IMR-90 (cell line): ENCODE measurements at regions of chr1 and their contacts with region 1.

Region 1: DNA sequence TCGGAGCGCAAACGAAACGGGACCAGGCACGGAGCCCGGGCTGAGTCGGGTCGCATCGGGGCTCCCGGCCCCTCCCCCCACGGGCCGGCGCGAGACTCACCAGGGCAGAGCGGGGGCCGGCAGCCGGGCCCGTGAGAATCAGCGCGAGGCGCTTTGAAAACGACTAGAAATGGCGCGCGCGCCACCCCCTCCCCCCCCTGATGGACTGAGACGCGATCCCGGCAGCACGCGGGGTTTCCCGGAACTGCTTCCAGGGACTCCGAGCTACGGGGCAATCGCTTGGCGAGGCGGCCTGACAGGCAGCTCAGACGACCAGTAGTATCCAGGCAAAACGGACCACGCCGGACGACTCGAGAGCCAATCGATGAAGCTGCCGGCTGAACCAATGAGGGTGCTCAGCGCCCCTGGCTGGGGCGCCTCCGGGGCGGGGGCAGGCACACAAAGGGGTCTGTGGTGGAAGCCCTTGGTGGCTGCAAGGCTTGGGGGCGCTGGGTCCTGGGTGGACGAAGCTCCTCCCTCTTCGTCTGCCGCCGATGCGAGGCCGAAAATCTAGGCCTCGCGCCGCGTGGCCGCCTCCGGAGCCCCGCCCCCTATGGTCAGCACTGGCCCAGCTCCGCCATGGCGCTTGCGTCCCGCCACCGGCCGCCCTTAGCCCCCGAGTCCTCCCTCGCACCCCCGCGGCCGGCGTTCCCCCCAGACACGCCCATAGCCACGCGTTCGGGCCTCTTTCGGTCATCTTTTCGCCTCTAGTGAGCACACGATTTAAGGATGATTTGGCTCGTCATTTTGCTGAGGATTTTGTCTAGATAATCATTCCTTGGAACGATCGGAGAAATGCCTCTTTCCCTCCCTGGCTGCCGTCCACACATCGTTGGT is at the start of gene HNRNPR:
- DNase-seq: peak; percentile 100
- ATAC-seq: peak; percentile 94
- H3K4me3 ChIP-seq: peak within 1 kb of the TSS; percentile 93
- H3K27ac ChIP-seq: peak within 1 kb of the TSS; percentile 95
- H3K4me1 ChIP-seq: peaks cover 2% of the 10 kb centered on the region; the same call in 1 of the 2 replicates
- H3K27me3 ChIP-seq: no peaks in the 10 kb centered on the region
- CTCF ChIP-seq: no peak
- POLR2A ChIP-seq: no peak; the same call in 1 of the 2 replicates
- RAD21 ChIP-seq: no peak
- total RNA-seq, gene HNRNPR: 99.7 and 152 TPM in 2 replicates

Region 2: GRCh38 chr1:23163395-23163794 is 181.0 kb before region 1 on chr1:
- CTCF ChIA-PET with region 1: no interaction called
- POLR2A ChIA-PET with region 1: interaction called, 17 read pairs
- dilution Hi-C with region 1: no loop called
- in situ Hi-C with region 1: no loop called
- intact Hi-C with region 1: no loop called
- DNase-seq: no peak
- ATAC-seq: no peak
- H3K4me3 ChIP-seq: no peak overlapping the region
- H3K27ac ChIP-seq: no peak overlapping the region
- H3K4me1 ChIP-seq: peaks cover 4% of the 10 kb centered on the region
- H3K27me3 ChIP-seq: no peaks in the 10 kb centered on the region
- CTCF ChIP-seq: no peak
- POLR2A ChIP-seq: no peak
- RAD21 ChIP-seq: no peak

Region 3: DNA sequence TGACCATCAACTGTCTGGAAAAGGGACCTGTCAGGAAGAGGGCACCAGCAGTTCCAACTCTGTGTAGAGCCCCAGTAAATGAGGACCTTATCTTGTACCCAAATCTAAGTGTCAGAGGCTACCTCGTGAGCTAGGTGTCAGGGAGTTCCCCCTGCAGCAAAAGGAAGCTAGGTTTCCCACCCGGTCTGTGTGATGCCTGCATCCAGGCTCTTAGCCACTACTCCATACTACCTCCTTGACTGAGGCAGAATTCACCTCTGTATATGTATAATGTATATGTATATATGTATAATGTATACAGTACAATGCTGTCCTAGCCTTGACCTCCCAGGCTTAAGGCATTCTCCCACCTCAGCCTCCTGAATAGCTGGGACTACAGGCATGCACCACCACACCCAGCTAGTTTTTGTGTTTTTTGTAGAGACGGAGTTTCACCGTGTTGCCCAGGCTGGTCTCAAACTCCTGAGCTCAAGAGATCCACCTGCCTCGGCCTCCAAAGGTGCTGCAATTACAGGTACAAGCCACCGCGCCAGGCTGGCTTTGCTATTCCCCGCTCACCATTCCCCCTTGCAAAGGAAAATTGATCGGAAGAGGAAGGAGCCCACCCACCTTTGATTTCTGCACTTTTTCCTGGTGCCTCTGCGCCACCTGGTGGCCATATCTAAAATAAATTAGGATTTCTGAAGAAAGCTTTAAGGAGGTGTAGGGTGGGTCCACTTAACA is 160.0 kb before region 1 on chr1:
- CTCF ChIA-PET with region 1: no interaction called
- POLR2A ChIA-PET with region 1: interaction called, 14 read pairs
- dilution Hi-C with region 1: no loop called
- in situ Hi-C with region 1: no loop called
- intact Hi-C with region 1: no loop called
- DNase-seq: peak; percentile 41
- ATAC-seq: peak; percentile 51; the same call in 1 of the 2 replicates
- H3K4me3 ChIP-seq: no peak overlapping the region
- H3K27ac ChIP-seq: no peak overlapping the region
- H3K4me1 ChIP-seq: 0 out of 2 replicates have a peak, but pooled peaks cover 4% of the 10 kb centered on the region
- H3K27me3 ChIP-seq: no peaks in the 10 kb centered on the region
- CTCF ChIP-seq: peak; percentile 72
- POLR2A ChIP-seq: no peak
- RAD21 ChIP-seq: peak; percentile 83

Region 4: DNA sequence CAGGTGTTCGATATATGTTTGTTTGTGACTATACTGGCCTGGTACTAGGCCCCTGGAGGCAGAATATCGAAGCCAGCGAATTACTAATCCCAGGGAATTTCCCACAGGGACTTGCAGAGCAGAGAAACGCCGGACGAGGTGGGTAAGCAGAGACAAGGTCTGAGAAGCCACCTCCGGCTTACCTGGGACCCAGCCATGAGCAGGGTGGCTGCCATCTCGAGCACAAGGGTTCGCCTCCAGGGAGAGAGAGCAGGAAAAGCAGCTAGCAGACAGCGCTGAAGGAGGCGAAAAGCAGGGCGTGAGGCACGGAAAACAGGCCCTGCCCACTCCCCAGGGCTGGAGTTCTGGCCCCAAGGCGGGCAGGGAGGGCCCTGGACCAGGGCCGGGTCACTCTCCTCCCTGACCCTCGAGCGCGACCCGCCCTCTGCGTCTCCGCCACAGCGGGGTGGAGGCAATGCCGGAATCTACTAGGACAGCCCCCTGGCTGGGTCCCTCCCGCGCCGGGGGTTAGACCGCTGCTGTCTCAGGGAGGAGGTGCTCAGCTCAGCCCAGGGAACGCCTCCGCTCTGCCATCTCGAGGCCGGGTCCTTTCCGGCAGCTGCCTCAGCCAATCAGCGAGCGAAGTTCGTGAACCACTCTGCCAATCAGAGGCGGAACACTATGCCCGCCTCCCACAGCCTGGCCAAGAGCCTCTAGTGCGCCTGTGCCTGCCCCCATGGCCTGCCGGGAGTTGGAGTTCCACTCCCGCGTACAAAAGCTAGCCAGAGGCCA is 23.6 kb after region 1 on chr1:
- CTCF ChIA-PET with region 1: no interaction called
- POLR2A ChIA-PET with region 1: interaction called, 3 read pairs
- dilution Hi-C with region 1: no loop called
- in situ Hi-C with region 1: no loop called
- intact Hi-C with region 1: loop called (anchors 1 kb)
- DNase-seq: peak; percentile 99
- ATAC-seq: peak; percentile 89
- H3K4me3 ChIP-seq: peak overlapping the region; percentile 67
- H3K27ac ChIP-seq: peak overlapping the region; percentile 95
- H3K4me1 ChIP-seq: peaks cover 15% of the 10 kb centered on the region
- H3K27me3 ChIP-seq: no peaks in the 10 kb centered on the region
- CTCF ChIP-seq: no peak
- POLR2A ChIP-seq: peak; percentile 54
- RAD21 ChIP-seq: no peak

Region 5: DNA sequence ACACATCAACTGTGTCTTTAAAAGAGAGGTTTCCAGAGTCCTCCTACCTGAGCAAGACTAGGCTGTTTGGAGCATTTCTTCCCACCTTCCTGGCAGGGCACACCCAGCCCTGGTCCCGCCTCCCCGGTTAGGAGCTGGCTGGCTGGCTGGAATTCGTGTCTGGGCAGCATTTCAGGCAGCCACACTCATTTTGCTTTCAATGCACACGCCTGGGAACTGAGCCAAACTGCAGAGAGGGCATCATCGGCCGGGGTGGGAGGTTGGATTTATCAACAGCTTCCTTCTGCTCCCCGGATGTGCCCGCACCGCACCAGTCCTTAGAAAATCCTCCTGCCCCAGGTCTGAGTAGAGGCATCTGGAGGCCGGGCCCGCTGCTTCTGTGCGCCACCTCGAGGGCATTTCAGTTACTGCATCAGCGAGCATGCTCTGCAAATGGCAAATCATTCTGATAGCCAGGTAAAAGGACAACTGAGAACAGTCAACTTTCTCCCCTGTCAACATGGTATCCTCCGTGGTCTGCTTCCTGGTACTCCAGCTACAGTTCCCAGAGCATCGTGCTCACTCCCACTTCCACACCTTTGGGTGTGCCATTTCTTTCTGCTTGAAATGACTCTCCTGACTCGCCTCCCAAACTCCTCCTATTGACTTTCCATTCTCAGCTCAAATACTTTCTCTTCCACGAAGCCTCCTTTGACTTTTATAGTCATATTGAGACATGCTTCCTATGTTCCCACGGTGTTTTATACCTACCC is 59.6 kb after region 1 on chr1:
- CTCF ChIA-PET with region 1: interaction called, 8 read pairs
- POLR2A ChIA-PET with region 1: no interaction called
- dilution Hi-C with region 1: no loop called
- in situ Hi-C with region 1: no loop called
- intact Hi-C with region 1: loop called (anchors 1 kb)
- DNase-seq: peak; percentile 89
- ATAC-seq: peak; percentile 89
- H3K4me3 ChIP-seq: no peak overlapping the region
- H3K27ac ChIP-seq: peak overlapping the region; percentile 23
- H3K4me1 ChIP-seq: peaks cover 21% of the 10 kb centered on the region
- H3K27me3 ChIP-seq: no peaks in the 10 kb centered on the region
- CTCF ChIP-seq: peak; percentile 89
- POLR2A ChIP-seq: no peak
- RAD21 ChIP-seq: peak; percentile 93

Region 6: GRCh38 chr1:23484253-23485001 is 140.1 kb after region 1 on chr1:
- CTCF ChIA-PET with region 1: no interaction called
- POLR2A ChIA-PET with region 1: no interaction called
- dilution Hi-C with region 1: no loop called
- in situ Hi-C with region 1: no loop called
- intact Hi-C with region 1: loop called (anchors 5 kb)
- DNase-seq: peak; percentile 89
- ATAC-seq: peak; percentile 94
- H3K4me3 ChIP-seq: peak overlapping the region; percentile 84
- H3K27ac ChIP-seq: peak overlapping the region; percentile 99
- H3K4me1 ChIP-seq: peaks cover 8% of the 10 kb centered on the region; the same call in 1 of the 2 replicates
- H3K27me3 ChIP-seq: peaks cover 5% of the 10 kb centered on the region
- CTCF ChIP-seq: no peak
- POLR2A ChIP-seq: no peak
- RAD21 ChIP-seq: no peak

Region 7: GRCh38 chr1:23530747-23531561 is 186.6 kb after region 1 on chr1 and contains the start of gene E2F2:
- CTCF ChIA-PET with region 1: no interaction called
- POLR2A ChIA-PET with region 1: interaction called, 4 read pairs
- dilution Hi-C with region 1: no loop called
- in situ Hi-C with region 1: no loop called
- intact Hi-C with region 1: loop called (anchors 5 kb)
- DNase-seq: peak; percentile 77
- ATAC-seq: peak; percentile 83
- H3K4me3 ChIP-seq: peak within 1 kb of the TSS; percentile 42
- H3K27ac ChIP-seq: peak within 1 kb of the TSS; percentile 5; the same call in 1 of the 2 replicates
- H3K4me1 ChIP-seq: peaks cover 9% of the 10 kb centered on the region; the same call in 1 of the 2 replicates
- H3K27me3 ChIP-seq: no peaks in the 10 kb centered on the region
- CTCF ChIP-seq: 0 out of 2 replicates have a peak, but pooled peaks have one; percentile 15
- POLR2A ChIP-seq: no peak
- RAD21 ChIP-seq: no peak
- total RNA-seq, gene E2F2: 0.36 and 0.56 TPM in 2 replicates

Region 8: DNA sequence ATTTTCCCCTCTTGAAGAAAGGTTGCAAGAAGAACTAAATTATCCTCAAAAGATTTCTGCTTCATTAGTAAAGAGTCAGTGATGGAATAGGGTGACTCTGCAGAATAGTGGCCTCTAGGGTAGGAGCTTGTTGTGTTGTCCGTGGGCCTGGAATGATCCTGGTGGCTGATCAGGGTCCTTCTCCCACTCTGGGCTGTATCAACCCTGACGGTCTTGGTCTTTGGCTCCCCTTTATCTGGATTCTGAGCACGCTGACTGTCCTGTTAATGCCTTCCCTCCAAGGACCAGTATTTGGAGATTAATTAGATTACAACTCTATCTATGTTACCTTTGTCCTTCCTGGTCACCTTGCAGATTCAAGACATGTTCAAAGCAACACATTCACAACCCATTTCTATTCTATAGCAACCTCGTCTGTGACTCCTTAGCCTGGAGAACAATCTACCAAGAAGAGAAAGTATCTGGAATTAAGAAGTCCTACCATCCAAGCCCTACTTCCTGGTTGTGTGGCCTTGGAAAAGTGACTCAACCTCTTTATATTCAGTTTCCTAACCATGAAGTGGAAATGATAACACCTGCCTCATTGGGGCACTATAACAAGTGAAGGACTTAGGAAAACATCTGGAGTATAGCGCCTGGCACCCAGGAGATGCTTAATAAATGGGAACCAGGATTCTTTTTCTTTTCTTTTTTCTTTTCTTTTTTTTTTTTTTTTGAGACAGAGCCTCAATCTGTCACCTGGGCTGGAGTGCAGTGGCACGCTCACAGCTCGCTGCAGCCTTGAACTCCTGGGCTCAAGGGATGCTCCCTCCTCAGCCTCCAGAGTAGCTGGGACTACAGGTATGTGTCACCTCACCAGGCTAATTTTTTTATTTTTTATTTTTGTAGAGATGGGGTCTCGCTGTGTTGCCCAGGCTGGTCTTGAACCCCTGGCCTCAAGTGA is 1262.2 kb after region 1 on chr1:
- CTCF ChIA-PET with region 1: no interaction called
- POLR2A ChIA-PET with region 1: no interaction called
- dilution Hi-C with region 1: no loop called
- in situ Hi-C with region 1: no loop called
- intact Hi-C with region 1: no loop called
- DNase-seq: no peak
- ATAC-seq: no peak
- H3K4me3 ChIP-seq: no peak overlapping the region
- H3K27ac ChIP-seq: no peak overlapping the region
- H3K4me1 ChIP-seq: no peaks in the 10 kb centered on the region
- H3K27me3 ChIP-seq: peaks cover 21% of the 10 kb centered on the region
- CTCF ChIP-seq: no peak
- POLR2A ChIP-seq: no peak
- RAD21 ChIP-seq: no peak